CD4-positive, alpha-beta T cell (primary cell): ENCODE measurements at regions of chr1 and their contacts with region 1.

Region 1: GRCh38 chr1:45011837-45012638 is at the start of gene UROD:
- DNase-seq: peak; percentile 77 to 96 (median 86)
- ATAC-seq: peak; percentile 82
- H3K4me3 ChIP-seq: peak within 1 kb of the TSS; percentile 84
- H3K4me3 Mint-ChIP-seq: peak within 1 kb of the TSS; percentile 89
- H3K27ac ChIP-seq: peak within 1 kb of the TSS; percentile 59 to 62
- H3K27ac Mint-ChIP-seq: peak within 1 kb of the TSS; percentile 91
- H3K4me1 ChIP-seq: peaks cover 63% of the 10 kb centered on the region
- H3K4me1 Mint-ChIP-seq: peaks cover 61% of the 10 kb centered on the region
- H3K27me3 ChIP-seq: no peaks in the 10 kb centered on the region
- H3K27me3 Mint-ChIP-seq: no peaks in the 10 kb centered on the region
- CTCF ChIP-seq: no peak
- total RNA-seq, gene UROD: 41.0 to 42.4 TPM

Region 2: GRCh38 chr1:44775078-44775929 is 236.7 kb before region 1 on chr1 and contains the start of gene RPS8:
- CTCF ChIA-PET with region 1: no interaction called
- POLR2A ChIA-PET with region 1: interaction called, 42 read pairs
- intact Hi-C with region 1: loop called in 1 of 2 experiments (anchors 2 kb)
- DNase-seq: peak; percentile 82 to 95 (median 86)
- ATAC-seq: peak; percentile 83
- H3K4me3 ChIP-seq: peak within 1 kb of the TSS; percentile 77
- H3K4me3 Mint-ChIP-seq: peak within 1 kb of the TSS; percentile 90
- H3K27ac ChIP-seq: peak within 1 kb of the TSS; percentile 91
- H3K27ac Mint-ChIP-seq: peak within 1 kb of the TSS; percentile 89
- H3K4me1 ChIP-seq: peaks cover 33% of the 10 kb centered on the region
- H3K4me1 Mint-ChIP-seq: peaks cover 54% of the 10 kb centered on the region
- H3K27me3 ChIP-seq: no peaks in the 10 kb centered on the region
- H3K27me3 Mint-ChIP-seq: no peaks in the 10 kb centered on the region
- CTCF ChIP-seq: no peak
- total RNA-seq, gene RPS8: 3,394 to 3,436 TPM

Region 3: DNA sequence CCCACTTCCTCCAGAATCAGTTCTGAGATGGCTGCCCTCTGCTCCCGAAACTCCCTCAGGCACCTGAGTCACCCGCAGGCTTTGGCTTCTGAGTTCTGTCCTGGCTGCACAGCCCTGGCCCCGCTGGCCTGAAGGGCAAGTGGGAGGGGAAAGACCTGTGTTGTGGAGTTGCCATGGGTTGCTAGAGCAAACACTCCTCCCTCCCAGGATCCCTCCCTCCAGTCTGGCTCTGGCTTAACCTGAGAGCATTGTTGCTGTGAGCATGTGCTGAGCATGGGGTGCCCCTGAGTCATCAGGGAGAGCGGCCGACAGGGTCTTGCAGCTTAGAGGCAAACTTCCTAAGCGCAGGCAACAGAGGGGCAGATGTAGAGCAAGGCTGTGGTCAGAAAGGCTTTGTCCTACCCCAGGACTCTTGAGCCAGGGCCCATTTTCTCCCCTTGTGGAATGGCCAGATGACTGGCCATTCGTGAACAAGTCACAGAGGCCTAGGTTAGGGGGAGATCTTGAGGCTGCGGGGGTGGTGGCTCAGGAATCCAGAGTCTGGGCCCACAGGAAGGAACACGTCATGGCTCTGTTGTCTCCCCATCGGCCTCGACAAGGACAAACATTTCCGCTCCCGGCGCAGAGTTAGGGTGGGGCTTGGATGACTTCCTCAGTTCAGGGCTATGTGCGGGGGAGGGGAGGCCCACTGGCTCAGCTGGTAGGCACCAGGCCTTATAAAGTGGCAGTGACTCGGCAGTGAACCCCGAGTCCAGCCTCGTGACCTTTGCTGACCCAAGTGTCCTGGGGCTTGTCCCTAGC is 204.6 kb before region 1 on chr1 and contains the start of gene DYNLT4:
- CTCF ChIA-PET with region 1: no interaction called
- POLR2A ChIA-PET with region 1: interaction called, 38 read pairs
- intact Hi-C with region 1: loop called in 1 of 2 experiments (anchors 10 kb)
- DNase-seq: peak; percentile 82 to 98 (median 94)
- ATAC-seq: peak; percentile 56
- H3K4me3 ChIP-seq: peak within 1 kb of the TSS; percentile 12
- H3K4me3 Mint-ChIP-seq: peak within 1 kb of the TSS; percentile 83
- H3K27ac ChIP-seq: peak within 1 kb of the TSS; percentile 99 to 100
- H3K27ac Mint-ChIP-seq: peak within 1 kb of the TSS; percentile 99
- H3K4me1 ChIP-seq: peaks cover 100% of the 10 kb centered on the region
- H3K4me1 Mint-ChIP-seq: peaks cover 79% of the 10 kb centered on the region
- H3K27me3 ChIP-seq: no peaks in the 10 kb centered on the region
- H3K27me3 Mint-ChIP-seq: peaks cover 4% of the 10 kb centered on the region
- CTCF ChIP-seq: no peak
- total RNA-seq, gene DYNLT4: 1.8 to 2.1 TPM

Region 4: GRCh38 chr1:44985747-44986359 is 26.2 kb before region 1 on chr1:
- CTCF ChIA-PET with region 1: interaction called, 7 read pairs
- POLR2A ChIA-PET with region 1: interaction called, 51 read pairs
- intact Hi-C with region 1: loop called (anchors 1 to 2 kb)
- DNase-seq: no peak
- ATAC-seq: no peak
- H3K4me3 ChIP-seq: peak overlapping the region; percentile 73
- H3K4me3 Mint-ChIP-seq: peak overlapping the region; percentile 99
- H3K27ac ChIP-seq: no peak overlapping the region
- H3K27ac Mint-ChIP-seq: peak overlapping the region; percentile 74
- H3K4me1 ChIP-seq: peaks cover 20% of the 10 kb centered on the region
- H3K4me1 Mint-ChIP-seq: peaks cover 32% of the 10 kb centered on the region
- H3K27me3 ChIP-seq: no peaks in the 10 kb centered on the region
- H3K27me3 Mint-ChIP-seq: no peaks in the 10 kb centered on the region
- CTCF ChIP-seq: no peak

Region 5: GRCh38 chr1:45079533-45079932 is 67.5 kb after region 1 on chr1:
- CTCF ChIA-PET with region 1: no interaction called
- POLR2A ChIA-PET with region 1: no interaction called
- intact Hi-C with region 1: no loop called
- DNase-seq: no peak
- ATAC-seq: no peak
- H3K4me3 ChIP-seq: no peak overlapping the region
- H3K4me3 Mint-ChIP-seq: no peak overlapping the region
- H3K27ac ChIP-seq: no peak overlapping the region
- H3K27ac Mint-ChIP-seq: no peak overlapping the region
- H3K4me1 ChIP-seq: peaks cover 10% of the 10 kb centered on the region
- H3K4me1 Mint-ChIP-seq: no peaks in the 10 kb centered on the region
- H3K27me3 ChIP-seq: no peaks in the 10 kb centered on the region
- H3K27me3 Mint-ChIP-seq: no peaks in the 10 kb centered on the region
- CTCF ChIP-seq: no peak

Region 6: DNA sequence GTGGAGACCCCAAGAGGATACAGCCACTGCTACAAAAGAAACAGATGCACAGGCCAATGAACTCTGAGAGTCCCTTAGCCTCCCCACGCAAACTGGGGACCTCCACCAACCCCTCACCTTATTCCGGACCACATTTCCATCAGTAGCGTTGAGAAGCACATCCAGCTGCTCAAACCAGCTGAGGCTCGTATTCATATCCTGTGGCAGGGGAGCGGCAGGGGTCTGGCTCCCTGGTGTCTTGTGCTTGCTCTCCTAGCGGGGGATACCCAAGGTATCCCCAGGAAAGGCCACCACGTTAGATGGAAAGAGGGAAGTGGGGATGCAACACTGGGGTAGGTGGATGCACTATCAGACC is 487.4 kb after region 1 on chr1:
- CTCF ChIA-PET with region 1: interaction called, 3 read pairs
- POLR2A ChIA-PET with region 1: interaction called, 18 read pairs
- intact Hi-C with region 1: no loop called
- DNase-seq: peak in 1 of 14 experiments; percentile 23
- ATAC-seq: no peak
- H3K4me3 ChIP-seq: peak overlapping the region; percentile 80
- H3K4me3 Mint-ChIP-seq: peak overlapping the region; percentile 96
- H3K27ac ChIP-seq: peak overlapping the region; percentile 0 to 53
- H3K27ac Mint-ChIP-seq: peak overlapping the region; percentile 83
- H3K4me1 ChIP-seq: peaks cover 24% of the 10 kb centered on the region
- H3K4me1 Mint-ChIP-seq: peaks cover 36% of the 10 kb centered on the region
- H3K27me3 ChIP-seq: no peaks in the 10 kb centered on the region
- H3K27me3 Mint-ChIP-seq: no peaks in the 10 kb centered on the region
- CTCF ChIP-seq: no peak

Region 7: DNA sequence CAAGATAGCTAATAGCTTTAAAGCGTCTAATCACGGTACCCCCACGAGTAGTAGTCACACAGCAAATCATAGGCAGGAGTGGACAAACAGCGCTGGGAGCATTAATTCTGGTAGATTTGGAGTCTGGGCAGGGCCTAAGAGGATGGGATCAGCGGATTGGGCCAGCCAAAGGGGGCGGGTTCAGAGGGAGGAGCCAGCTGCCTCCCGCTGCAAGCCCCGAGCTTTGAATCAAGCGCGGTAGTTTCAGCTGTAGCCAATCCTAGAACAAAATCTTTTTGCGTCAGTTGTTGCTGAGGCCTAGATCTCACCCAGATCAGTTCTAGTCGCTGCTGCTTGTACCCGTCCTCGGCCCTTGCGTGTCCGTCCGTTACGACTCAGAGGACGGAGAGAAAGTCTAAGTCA is 571.2 kb after region 1 on chr1:
- CTCF ChIA-PET with region 1: no interaction called
- POLR2A ChIA-PET with region 1: interaction called, 11 read pairs
- intact Hi-C with region 1: no loop called
- DNase-seq: peak; percentile 88 to 98 (median 92)
- ATAC-seq: peak; percentile 74
- H3K4me3 ChIP-seq: peak overlapping the region; percentile 95
- H3K4me3 Mint-ChIP-seq: peak overlapping the region; percentile 94
- H3K27ac ChIP-seq: peak overlapping the region; percentile 94 to 95
- H3K27ac Mint-ChIP-seq: peak overlapping the region; percentile 93
- H3K4me1 ChIP-seq: peaks cover 36% of the 10 kb centered on the region
- H3K4me1 Mint-ChIP-seq: peaks cover 36% of the 10 kb centered on the region
- H3K27me3 ChIP-seq: no peaks in the 10 kb centered on the region
- H3K27me3 Mint-ChIP-seq: no peaks in the 10 kb centered on the region
- CTCF ChIP-seq: no peak